Ascending aorta (tissue), 2 donors: ENCODE measurements at regions of chr1 and their contacts with region 1.

Region 1: DNA sequence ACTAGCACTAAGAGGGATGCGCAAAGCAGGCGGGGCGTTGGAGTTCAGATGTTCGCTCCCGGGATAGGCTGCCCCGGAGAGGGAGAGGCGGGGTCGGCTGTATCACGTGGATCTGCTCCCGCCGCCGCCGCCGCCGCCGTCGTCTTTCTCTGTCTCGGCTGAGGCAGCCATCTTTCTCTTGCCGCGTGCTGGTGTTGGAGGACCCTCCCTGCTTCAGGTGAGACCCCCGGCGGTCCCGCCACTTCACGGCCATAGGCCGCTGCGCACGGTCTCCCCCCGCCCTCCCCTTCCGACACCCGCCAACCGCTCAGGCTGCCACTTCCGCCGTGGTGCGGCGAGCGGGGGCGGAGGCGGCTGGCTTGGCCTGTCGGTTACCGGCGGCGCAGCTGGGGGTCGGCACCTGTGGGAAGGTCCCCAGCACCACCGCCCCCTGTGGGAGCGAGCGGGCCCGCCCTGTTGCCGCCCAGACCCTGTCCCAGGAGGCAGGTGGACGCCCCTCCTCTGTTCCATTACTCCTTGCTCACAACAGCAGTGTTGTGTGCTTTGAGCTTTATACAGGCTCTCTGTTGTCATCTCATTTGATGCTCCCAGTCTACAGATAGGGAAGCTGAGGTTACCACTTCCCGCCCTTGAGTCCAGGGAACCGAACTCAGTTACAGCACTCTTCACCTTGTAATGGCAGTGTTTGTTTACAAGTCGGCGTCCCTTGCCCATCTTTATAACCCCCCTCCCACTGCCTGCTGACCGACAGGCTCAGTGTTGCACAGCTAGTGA is at the start of gene BTF3L4:
- DNase-seq: peak; percentile 85 to 97
- H3K4me3 ChIP-seq: peak within 1 kb of the TSS; percentile 84 to 90
- H3K27ac ChIP-seq: peak within 1 kb of the TSS; percentile 91 to 95
- H3K4me1 ChIP-seq: peaks cover 3 to 17% of the 10 kb centered on the region in 2 donors
- H3K27me3 ChIP-seq: no peaks in the 10 kb centered on the region
- CTCF ChIP-seq: no peak
- total RNA-seq, gene BTF3L4: 39.9 TPM

Region 2: GRCh38 chr1:51519048-51519864 is 537.1 kb before region 1 on chr1 and contains the start of gene EPS15:
- intact Hi-C with region 1: loop called (anchors 10 kb)
- DNase-seq: peak; percentile 55 to 91
- H3K4me3 ChIP-seq: peak within 1 kb of the TSS; percentile 95 to 98
- H3K27ac ChIP-seq: peak within 1 kb of the TSS; percentile 86 to 93
- H3K4me1 ChIP-seq: peaks cover 3 to 16% of the 10 kb centered on the region in 2 donors
- H3K27me3 ChIP-seq: no peaks in the 10 kb centered on the region
- CTCF ChIP-seq: no peak
- total RNA-seq, gene EPS15: 44.6 TPM

Region 3: DNA sequence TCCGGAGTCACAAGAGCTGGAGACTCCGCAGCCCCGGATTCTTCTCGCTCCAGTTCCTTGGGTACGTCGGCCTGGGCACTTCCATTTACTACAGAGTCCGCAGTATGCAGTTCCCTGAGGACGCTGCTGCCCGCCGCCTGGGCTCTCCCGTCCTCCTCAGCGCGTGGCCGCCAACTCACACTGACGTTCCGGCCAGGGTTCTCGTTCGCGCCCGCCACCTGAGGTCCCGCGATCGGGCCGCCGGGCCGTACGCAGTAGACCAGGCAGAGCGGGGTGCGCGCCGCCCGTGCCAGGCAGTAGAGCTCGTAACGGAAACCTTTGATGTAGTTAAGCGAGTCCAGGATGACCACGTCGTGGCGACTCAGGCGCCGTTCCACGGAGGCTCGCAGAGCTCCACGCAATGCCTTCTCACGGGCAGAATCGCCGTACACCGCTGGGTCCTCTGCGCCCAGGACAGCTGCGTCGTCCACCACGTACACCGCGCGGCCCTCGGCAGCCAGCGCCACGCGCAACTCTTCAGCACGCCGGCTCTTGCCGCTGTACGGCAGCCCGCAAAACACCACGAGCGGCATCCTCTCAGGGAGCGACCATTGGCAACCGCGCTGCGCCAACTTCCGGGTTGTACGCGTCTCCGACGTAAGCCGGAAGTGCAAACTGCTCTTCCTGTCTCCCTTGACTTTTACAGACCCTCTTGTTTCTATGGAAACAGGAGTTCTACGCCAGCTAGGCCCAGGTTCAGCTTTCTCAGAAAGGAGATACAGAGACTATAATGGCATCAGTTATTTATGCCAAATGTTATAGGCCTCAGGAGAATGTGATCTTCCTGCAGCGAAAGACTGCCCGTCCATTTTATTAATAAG is 22.9 kb before region 1 on chr1 and contains the start of gene KTI12:
- intact Hi-C with region 1: loop called (anchors 1 kb)
- DNase-seq: peak in 1 of 2 donors; percentile 91
- H3K4me3 ChIP-seq: peak within 1 kb of the TSS; percentile 79 to 84
- H3K27ac ChIP-seq: peak within 1 kb of the TSS; percentile 88 to 95
- H3K4me1 ChIP-seq: peaks cover 3 to 18% of the 10 kb centered on the region in 2 donors
- H3K27me3 ChIP-seq: no peaks in the 10 kb centered on the region
- CTCF ChIP-seq: no peak
- total RNA-seq, gene KTI12: 10.3 TPM

Region 4: GRCh38 chr1:52404116-52404986 is 348.0 kb after region 1 on chr1 and contains the starts of genes ORC1 and PRPF38A:
- intact Hi-C with region 1: loop called (anchors 5 kb)
- DNase-seq: peak; percentile 85 to 98
- H3K4me3 ChIP-seq: peak within 1 kb of the TSS; percentile 87 to 91
- H3K27ac ChIP-seq: peak within 1 kb of the TSS; percentile 85 to 96
- H3K4me1 ChIP-seq: peaks cover 10 to 15% of the 10 kb centered on the region in 2 donors
- H3K27me3 ChIP-seq: no peaks in the 10 kb centered on the region
- CTCF ChIP-seq: peak; percentile 32 to 59 (median 51)
- total RNA-seq, gene ORC1: not detected
- total RNA-seq, gene PRPF38A: 20.3 TPM